ENCODE measurements at regions of chr13 and their contacts with region 1.

Region 1: GRCh38 chr13:43041369-43041921 is 18.1 kb downstream of the DNAJC15 start:
- DNase-seq: no peak
- H3K4me3 ChIP-seq: no peak overlapping the region
- H3K4me3 Mint-ChIP-seq: peak overlapping the region; percentile 68
- H3K27ac Mint-ChIP-seq: peak overlapping the region; percentile 78
- H3K4me1 ChIP-seq: peaks cover 85% of the 10 kb centered on the region
- H3K4me1 Mint-ChIP-seq: peaks cover 74% of the 10 kb centered on the region
- H3K27me3 ChIP-seq: no peaks in the 10 kb centered on the region
- H3K27me3 Mint-ChIP-seq: no peaks in the 10 kb centered on the region
- CTCF ChIP-seq: no peak

Region 2: GRCh38 chr13:42991892-42992763 is 49.3 kb before region 1 on chr13 and contains the start of gene EPSTI1:
- CTCF ChIA-PET with region 1: no interaction called
- POLR2A ChIA-PET with region 1: no interaction called
- intact Hi-C with region 1: loop called (anchors 1 kb)
- DNase-seq: peak; percentile 84 to 92
- H3K4me3 ChIP-seq: peak within 1 kb of the TSS; percentile 59
- H3K4me3 Mint-ChIP-seq: peak within 1 kb of the TSS; percentile 91
- H3K27ac Mint-ChIP-seq: peak within 1 kb of the TSS; percentile 91
- H3K4me1 ChIP-seq: peaks cover 49% of the 10 kb centered on the region
- H3K4me1 Mint-ChIP-seq: peaks cover 33% of the 10 kb centered on the region
- H3K27me3 ChIP-seq: no peaks in the 10 kb centered on the region
- H3K27me3 Mint-ChIP-seq: no peaks in the 10 kb centered on the region
- CTCF ChIP-seq: no peak
- total RNA-seq, gene EPSTI1: 80.6 and 86.5 TPM in 2 replicates

Region 3: DNA sequence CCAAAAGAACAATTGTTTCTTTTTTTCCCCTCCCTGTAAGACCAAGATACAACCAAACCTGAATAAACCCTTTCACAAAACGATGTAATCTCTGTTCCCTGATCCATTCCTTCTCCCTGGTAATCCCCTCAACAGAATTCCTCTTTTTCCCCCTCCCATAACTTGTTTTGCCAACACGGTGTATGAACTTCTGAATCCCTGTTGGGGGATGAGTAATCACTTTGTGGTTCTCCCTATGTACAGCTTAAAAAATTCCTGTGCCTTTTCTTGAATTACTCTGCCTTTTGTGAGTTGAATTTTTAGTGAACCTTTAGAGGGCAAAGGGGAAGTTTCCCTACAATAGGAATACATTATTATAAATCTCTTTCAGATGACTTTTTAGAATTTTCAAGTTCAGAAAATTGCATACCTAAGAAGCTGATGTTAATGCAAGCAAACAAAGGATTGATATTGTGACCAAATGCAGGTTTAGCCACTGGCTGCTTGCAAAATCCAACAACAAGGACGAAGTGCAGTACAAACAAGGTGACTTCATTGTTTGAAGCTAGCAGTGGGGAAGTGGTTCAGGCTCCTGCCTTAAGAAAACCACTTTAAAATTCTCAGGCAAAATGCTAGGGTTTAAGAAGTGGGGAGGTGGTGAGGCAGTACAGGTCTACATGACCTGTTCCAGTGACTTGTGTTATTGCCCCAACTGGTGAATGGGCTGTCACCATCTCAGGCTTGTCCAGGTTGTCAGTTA is 34.4 kb before region 1 on chr13:
- CTCF ChIA-PET with region 1: no interaction called
- POLR2A ChIA-PET with region 1: no interaction called
- intact Hi-C with region 1: loop called (anchors 5 kb)
- DNase-seq: no peak
- H3K4me3 ChIP-seq: no peak overlapping the region
- H3K4me3 Mint-ChIP-seq: peak overlapping the region; percentile 15
- H3K27ac Mint-ChIP-seq: peak overlapping the region; percentile 85
- H3K4me1 ChIP-seq: peaks cover 49% of the 10 kb centered on the region
- H3K4me1 Mint-ChIP-seq: peaks cover 60% of the 10 kb centered on the region
- H3K27me3 ChIP-seq: no peaks in the 10 kb centered on the region
- H3K27me3 Mint-ChIP-seq: no peaks in the 10 kb centered on the region
- CTCF ChIP-seq: no peak

Region 4: GRCh38 chr13:43061496-43062265 is 20.2 kb after region 1 on chr13:
- CTCF ChIA-PET with region 1: no interaction called
- POLR2A ChIA-PET with region 1: no interaction called
- intact Hi-C with region 1: no loop called
- DNase-seq: no peak
- H3K4me3 ChIP-seq: no peak overlapping the region
- H3K4me3 Mint-ChIP-seq: peak overlapping the region; percentile 47
- H3K27ac Mint-ChIP-seq: peak overlapping the region; percentile 40
- H3K4me1 ChIP-seq: peaks cover 73% of the 10 kb centered on the region
- H3K4me1 Mint-ChIP-seq: peaks cover 40% of the 10 kb centered on the region
- H3K27me3 ChIP-seq: no peaks in the 10 kb centered on the region
- H3K27me3 Mint-ChIP-seq: no peaks in the 10 kb centered on the region
- CTCF ChIP-seq: no peak

Region 5: DNA sequence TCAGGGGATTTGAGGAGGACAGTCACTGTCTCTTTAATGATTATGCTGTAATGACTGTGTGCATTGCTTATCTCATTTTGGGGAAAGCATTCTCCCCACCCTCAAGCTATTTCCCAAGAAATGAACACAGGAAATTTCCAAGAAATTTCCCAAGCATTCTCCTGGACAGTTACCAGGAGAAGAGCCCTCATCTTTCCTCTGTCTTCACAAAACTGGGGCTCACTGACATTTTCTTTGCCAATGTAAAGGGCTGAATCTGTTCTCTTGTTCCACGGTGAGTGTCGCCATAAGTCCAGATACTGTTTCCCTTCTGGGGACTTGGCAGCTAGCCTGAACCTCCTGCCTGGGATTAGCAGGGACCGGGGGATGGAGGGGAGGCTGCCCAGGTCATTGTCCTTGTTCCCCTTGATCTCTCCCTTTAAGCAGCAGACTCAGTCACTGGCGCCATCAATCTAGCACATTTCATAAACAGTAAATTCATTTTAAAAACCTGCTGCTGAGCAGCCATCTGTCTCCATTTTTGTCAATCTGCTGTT is 154.7 kb after region 1 on chr13:
- CTCF ChIA-PET with region 1: no interaction called
- POLR2A ChIA-PET with region 1: no interaction called
- intact Hi-C with region 1: no loop called
- DNase-seq: no peak
- H3K4me3 ChIP-seq: no peak overlapping the region
- H3K4me3 Mint-ChIP-seq: no peak overlapping the region
- H3K27ac Mint-ChIP-seq: no peak overlapping the region
- H3K4me1 ChIP-seq: peaks cover 38% of the 10 kb centered on the region
- H3K4me1 Mint-ChIP-seq: peaks cover 20% of the 10 kb centered on the region
- H3K27me3 ChIP-seq: no peaks in the 10 kb centered on the region
- H3K27me3 Mint-ChIP-seq: no peaks in the 10 kb centered on the region
- CTCF ChIP-seq: no peak